Mammary epithelial cell (primary cell): ENCODE measurements at regions of chr12 and their contacts with region 1.

Region 1: GRCh38 chr12:57452937-57453509 is 2.1 kb upstream of the INHBE start:
- DNase-seq: peak; percentile 50
- H3K4me3 ChIP-seq: no peak overlapping the region
- H3K27ac ChIP-seq: no peak overlapping the region
- H3K4me1 ChIP-seq: peaks cover 13% of the 10 kb centered on the region
- H3K27me3 ChIP-seq: no peaks in the 10 kb centered on the region
- CTCF ChIP-seq: peak; percentile 95

Region 2: GRCh38 chr12:57202321-57202720 is 250.7 kb before region 1 on chr12:
- CTCF ChIA-PET with region 1: no interaction called
- dilution Hi-C with region 1: no loop called
- in situ Hi-C with region 1: no loop called
- intact Hi-C with region 1: no loop called
- DNase-seq: no peak
- H3K4me3 ChIP-seq: no peak overlapping the region
- H3K27ac ChIP-seq: no peak overlapping the region
- H3K4me1 ChIP-seq: no peaks in the 10 kb centered on the region
- H3K27me3 ChIP-seq: no peaks in the 10 kb centered on the region
- CTCF ChIP-seq: no peak

Region 3: DNA sequence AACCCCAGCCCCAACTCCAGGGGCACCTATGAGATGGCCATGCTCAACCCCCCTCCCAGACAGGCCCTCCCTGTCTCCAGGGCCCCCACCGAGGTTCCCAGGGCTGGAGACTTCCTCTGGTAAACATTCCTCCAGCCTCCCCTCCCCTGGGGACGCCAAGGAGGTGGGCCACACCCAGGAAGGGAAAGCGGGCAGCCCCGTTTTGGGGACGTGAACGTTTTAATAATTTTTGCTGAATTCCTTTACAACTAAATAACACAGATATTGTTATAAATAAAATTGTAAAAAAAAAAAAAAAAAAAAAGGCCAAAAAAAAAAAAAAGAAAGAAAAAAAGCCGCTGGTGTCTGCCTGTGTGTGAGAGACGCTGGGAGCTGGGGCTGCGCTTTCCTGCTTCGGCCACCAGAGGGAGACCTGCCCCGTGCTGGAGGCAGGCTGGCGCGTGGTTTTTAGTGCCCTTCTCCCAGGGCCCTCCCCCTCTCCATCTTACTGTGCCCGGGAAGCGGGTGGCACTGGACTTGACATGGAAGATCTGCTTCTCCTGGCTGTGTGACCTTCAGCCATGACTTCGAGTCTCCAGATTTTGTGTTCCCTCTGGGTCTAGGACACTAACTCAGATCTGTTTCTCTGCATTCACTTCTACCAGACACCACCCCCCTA is 239.8 kb before region 1 on chr12:
- CTCF ChIA-PET with region 1: no interaction called
- dilution Hi-C with region 1: no loop called
- in situ Hi-C with region 1: no loop called
- intact Hi-C with region 1: loop called (anchors 1 kb)
- DNase-seq: peak; percentile 68
- H3K4me3 ChIP-seq: no peak overlapping the region
- H3K27ac ChIP-seq: no peak overlapping the region
- H3K4me1 ChIP-seq: peaks cover 15% of the 10 kb centered on the region
- H3K27me3 ChIP-seq: peaks cover 6% of the 10 kb centered on the region
- CTCF ChIP-seq: peak; percentile 95 to 96

Region 4: GRCh38 chr12:57258977-57259970 is 193.7 kb before region 1 on chr12:
- CTCF ChIA-PET with region 1: interaction called, 3 read pairs
- dilution Hi-C with region 1: no loop called
- in situ Hi-C with region 1: loop called in 1 of 2 experiments (anchors 10 kb)
- intact Hi-C with region 1: loop called (anchors 1 kb)
- DNase-seq: no peak
- H3K4me3 ChIP-seq: no peak overlapping the region
- H3K27ac ChIP-seq: no peak overlapping the region
- H3K4me1 ChIP-seq: no peaks in the 10 kb centered on the region
- H3K27me3 ChIP-seq: no peaks in the 10 kb centered on the region
- CTCF ChIP-seq: no peak

Region 5: GRCh38 chr12:57309420-57309819 is 143.6 kb before region 1 on chr12:
- CTCF ChIA-PET with region 1: interaction called, 39 read pairs
- dilution Hi-C with region 1: no loop called
- in situ Hi-C with region 1: loop called (anchors 5 to 10 kb)
- intact Hi-C with region 1: loop called (anchors 1 kb)
- DNase-seq: peak; percentile 13
- H3K4me3 ChIP-seq: no peak overlapping the region
- H3K27ac ChIP-seq: no peak overlapping the region
- H3K4me1 ChIP-seq: peaks cover 8% of the 10 kb centered on the region
- H3K27me3 ChIP-seq: no peaks in the 10 kb centered on the region
- CTCF ChIP-seq: no peak